ENCODE measurements at regions of chr9 and their contacts with region 1.

Region 1: DNA sequence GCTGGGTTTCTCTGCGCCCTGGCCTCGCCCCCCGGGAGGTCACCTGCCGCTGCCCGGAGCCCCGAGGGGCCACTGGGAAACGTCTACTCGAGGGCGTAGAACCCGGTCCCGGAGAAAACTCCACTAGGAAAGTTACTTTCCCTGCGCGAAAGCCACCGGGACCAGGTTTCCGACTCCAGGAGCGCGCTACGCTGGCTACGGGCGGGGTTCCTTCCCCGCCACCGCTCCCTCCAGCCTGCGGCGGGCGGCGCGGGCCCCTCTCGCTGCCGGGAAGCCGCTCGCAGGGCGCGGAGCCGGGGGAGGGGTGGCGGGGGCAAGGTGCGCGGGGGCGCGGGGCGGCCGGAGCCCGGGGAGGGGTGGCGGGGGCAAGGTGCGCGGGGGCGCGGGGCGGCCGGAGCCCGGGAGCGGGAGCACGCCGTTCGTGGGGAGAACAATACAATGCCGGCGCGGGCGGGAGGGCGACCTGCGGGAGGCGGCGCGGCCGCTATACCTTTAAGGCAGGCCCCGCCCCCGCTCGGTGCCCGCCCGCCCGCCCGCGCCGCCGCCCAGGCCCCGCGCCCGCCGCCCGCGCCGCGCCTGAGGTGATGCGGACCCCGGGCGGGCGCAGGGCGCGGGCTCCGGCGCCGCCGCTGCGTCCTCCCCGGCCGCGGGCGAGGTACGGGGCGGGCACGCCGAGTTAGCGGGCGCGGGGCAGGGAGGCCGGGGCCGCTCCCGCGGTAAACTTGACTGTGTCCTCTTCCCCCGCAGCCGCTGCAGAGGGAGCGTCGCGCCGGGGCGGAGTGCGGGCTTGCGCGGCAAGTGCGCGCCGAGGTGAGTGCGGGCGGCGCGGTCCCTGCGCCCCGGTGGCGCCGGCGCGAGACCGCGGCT is 278.1 kb downstream of the AOPEP start:
- DNase-seq: peak; percentile 73 to 83 (median 78)
- ATAC-seq: peak in 3 of 4 donors; percentile 17 to 59 (median 44)
- H3K4me3 ChIP-seq: peak overlapping the region; percentile 61 to 94 (median 84)
- H3K27ac ChIP-seq: peak overlapping the region; percentile 95 to 100 (median 99)
- H3K4me1 ChIP-seq: peaks cover 0 to 57% (median 29%) of the 10 kb centered on the region in 12 donors
- H3K27me3 ChIP-seq: peaks cover 0 to 17% (median 0%) of the 10 kb centered on the region in 9 donors
- CTCF ChIP-seq: no peak
- POLR2A ChIP-seq: peak in 1 of 2 donors; percentile 60

Region 2: GRCh38 chr9:94867281-94867841 is 137.3 kb before region 1 on chr9:
- intact Hi-C with region 1: loop called in 9 of 10 experiments (anchors 2 to 5 kb)
- DNase-seq: peak in 4 of 5 donors; percentile 73 to 84 (median 76)
- ATAC-seq: peak; percentile 76 to 87 (median 84)
- H3K4me3 ChIP-seq: peak overlapping the region in 6 of 12 donors; percentile 2 to 22 (median 7)
- H3K27ac ChIP-seq: peak overlapping the region; percentile 70 to 98 (median 88)
- H3K4me1 ChIP-seq: peaks cover 10 to 83% (median 63%) of the 10 kb centered on the region in 12 donors
- H3K27me3 ChIP-seq: no peaks in the 10 kb centered on the region
- CTCF ChIP-seq: no peak
- POLR2A ChIP-seq: peak in 1 of 2 donors; percentile 45

Region 3: DNA sequence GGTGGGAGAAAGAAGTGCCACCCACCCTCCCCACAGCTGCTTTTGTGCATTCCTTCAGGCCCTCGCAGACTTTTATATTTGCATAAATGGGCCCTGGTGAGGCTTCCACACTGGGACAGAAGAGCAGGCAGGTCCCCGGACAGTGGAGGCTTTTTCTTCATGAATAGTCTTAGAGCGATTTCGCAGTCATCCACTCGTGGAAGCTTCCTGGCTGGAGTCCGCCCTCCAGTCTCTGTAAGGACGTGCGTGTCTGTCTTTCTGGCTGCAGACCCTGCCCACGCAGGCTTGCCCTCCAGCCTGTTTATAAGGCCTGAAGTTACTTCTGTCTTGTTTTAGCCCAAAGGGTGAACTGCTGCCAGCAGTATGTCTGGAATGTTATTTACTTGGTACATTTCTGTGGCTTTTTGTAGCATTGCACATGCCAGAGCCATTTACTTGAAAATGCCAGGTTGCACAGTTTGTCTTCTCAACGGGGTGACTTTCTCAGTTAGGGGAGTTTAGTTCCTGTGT is 82.5 kb before region 1 on chr9:
- intact Hi-C with region 1: loop called in 2 of 10 experiments (anchors 5 to 10 kb)
- DNase-seq: peak in 2 of 5 donors; percentile 44 to 46
- ATAC-seq: peak; percentile 15 to 42 (median 30)
- H3K4me3 ChIP-seq: peak overlapping the region in 1 of 12 donors; percentile 5
- H3K27ac ChIP-seq: peak overlapping the region; percentile 53 to 82 (median 70)
- H3K4me1 ChIP-seq: peaks cover 3 to 49% (median 34%) of the 10 kb centered on the region in 12 donors
- H3K27me3 ChIP-seq: no peaks in the 10 kb centered on the region
- CTCF ChIP-seq: no peak
- POLR2A ChIP-seq: no peak

Region 4: GRCh38 chr9:95048225-95049087 is 43.8 kb after region 1 on chr9:
- intact Hi-C with region 1: loop called in 3 of 10 experiments (anchors 2 to 5 kb)
- DNase-seq: peak; percentile 67 to 86 (median 73)
- ATAC-seq: peak; percentile 38 to 86 (median 74)
- H3K4me3 ChIP-seq: peak overlapping the region; percentile 21 to 65 (median 54)
- H3K27ac ChIP-seq: peak overlapping the region; percentile 47 to 90 (median 82)
- H3K4me1 ChIP-seq: peaks cover 6 to 97% (median 60%) of the 10 kb centered on the region in 12 donors
- H3K27me3 ChIP-seq: peaks cover 0 to 2% (median 0%) of the 10 kb centered on the region in 9 donors
- CTCF ChIP-seq: no peak
- POLR2A ChIP-seq: peak in 1 of 2 donors; percentile 28

Region 5: DNA sequence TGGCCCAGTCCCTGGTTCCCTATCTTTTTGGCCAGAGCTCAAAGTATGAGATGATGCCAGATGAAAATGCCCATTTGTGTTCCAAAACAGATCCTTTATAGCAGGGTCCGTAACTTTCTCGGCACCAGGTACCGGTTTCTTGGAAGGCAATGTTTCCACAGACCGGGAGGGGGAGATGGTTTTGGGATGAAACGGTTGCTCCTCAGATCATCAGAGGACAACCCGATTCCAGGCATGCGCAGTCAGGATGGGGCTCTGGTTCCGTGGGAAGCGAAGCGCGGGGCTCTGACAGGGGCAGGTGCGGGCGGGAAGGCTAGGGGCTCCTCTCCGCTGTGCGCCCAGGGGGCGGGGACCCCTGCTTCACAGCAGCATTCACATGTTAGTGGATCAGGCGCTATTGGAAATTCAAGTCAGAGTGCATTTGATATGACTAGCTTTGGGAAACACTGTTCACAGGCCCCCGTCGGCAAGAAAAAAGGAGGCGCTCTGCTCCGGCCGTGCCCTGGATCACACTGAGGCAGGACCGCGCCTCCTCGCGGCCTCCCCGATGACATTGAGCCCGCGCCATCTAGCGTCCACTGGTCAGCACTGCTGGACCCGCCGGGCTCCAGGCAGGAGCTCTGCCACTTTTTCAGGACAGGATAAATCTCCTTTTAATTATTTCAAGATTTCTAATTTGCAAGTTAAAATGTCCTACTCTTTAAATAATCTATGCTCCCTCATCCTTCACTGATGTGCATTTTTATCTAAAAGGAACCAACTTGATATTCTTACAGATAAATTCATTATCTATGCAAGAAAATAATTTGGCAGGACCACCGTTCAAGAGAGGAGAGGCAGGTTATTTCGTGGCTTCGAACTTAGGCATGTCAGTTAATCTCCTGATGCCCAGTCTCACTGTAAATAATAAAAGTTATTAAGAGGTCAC is 122.9 kb after region 1 on chr9:
- intact Hi-C with region 1: loop called in 1 of 10 experiments (anchors 5 kb)
- DNase-seq: peak; percentile 86 to 92 (median 88)
- ATAC-seq: peak; percentile 83 to 91 (median 89)
- H3K4me3 ChIP-seq: peak overlapping the region in 11 of 12 donors; percentile 8 to 58 (median 45)
- H3K27ac ChIP-seq: peak overlapping the region in 4 of 12 donors; percentile 25 to 59 (median 48)
- H3K4me1 ChIP-seq: peaks cover 0 to 24% (median 8%) of the 10 kb centered on the region in 12 donors
- H3K27me3 ChIP-seq: no peaks in the 10 kb centered on the region
- CTCF ChIP-seq: peak; percentile 92 to 99 (median 98)
- POLR2A ChIP-seq: no peak